ENCODE measurements at regions of chr17 and their contacts with region 1.

Region 1: GRCh38 chr17:41421121-41421520 is 3.3 kb downstream of the KRT37 start:
- DNase-seq: no peak
- H3K4me3 ChIP-seq: no peak overlapping the region
- H3K27ac ChIP-seq: peak overlapping the region; percentile 68 to 82
- H3K4me1 ChIP-seq: peaks cover 0 to 9% of the 10 kb centered on the region in 2 donors
- H3K27me3 ChIP-seq: no peaks in the 10 kb centered on the region
- CTCF ChIP-seq: no peak
- POLR2A ChIP-seq: no peak

Region 2: DNA sequence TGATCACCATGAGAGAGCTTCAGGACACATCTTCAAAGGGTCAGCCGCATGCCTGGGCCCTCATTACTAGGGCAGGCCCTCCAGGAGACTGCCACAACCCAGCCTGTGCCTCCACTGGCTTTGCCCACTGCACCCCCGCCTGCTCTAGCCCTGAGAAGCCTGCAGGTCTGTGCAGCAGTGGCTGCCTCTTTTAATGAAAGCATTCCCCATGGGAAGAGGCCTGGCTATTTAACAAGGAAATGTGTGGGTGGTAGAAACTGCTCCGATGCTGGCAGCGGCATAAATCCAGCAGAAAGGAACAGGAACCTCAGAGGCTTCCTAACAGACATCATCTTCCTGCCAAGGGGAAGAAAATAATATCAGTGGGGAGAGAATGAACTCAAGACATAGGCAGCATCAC is 46.4 kb after region 1 on chr17:
- intact Hi-C with region 1: no loop called
- DNase-seq: peak in 1 of 2 donors; percentile 57
- H3K4me3 ChIP-seq: no peak overlapping the region
- H3K27ac ChIP-seq: peak overlapping the region; percentile 52 to 58
- H3K4me1 ChIP-seq: no peaks in the 10 kb centered on the region
- H3K27me3 ChIP-seq: no peaks in the 10 kb centered on the region
- CTCF ChIP-seq: no peak
- POLR2A ChIP-seq: no peak

Region 3: GRCh38 chr17:41505809-41506731 is 84.9 kb after region 1 on chr17:
- intact Hi-C with region 1: loop called (anchors 2 kb)
- DNase-seq: no peak
- H3K4me3 ChIP-seq: no peak overlapping the region
- H3K27ac ChIP-seq: no peak overlapping the region
- H3K4me1 ChIP-seq: no peaks in the 10 kb centered on the region
- H3K27me3 ChIP-seq: no peaks in the 10 kb centered on the region
- CTCF ChIP-seq: no peak
- POLR2A ChIP-seq: no peak

Measured in breast epithelium (tissue), 4 donors.